Endothelial cell of umbilical vein (primary cell): ENCODE measurements at regions of chr9 and their contacts with region 1.

Region 1: DNA sequence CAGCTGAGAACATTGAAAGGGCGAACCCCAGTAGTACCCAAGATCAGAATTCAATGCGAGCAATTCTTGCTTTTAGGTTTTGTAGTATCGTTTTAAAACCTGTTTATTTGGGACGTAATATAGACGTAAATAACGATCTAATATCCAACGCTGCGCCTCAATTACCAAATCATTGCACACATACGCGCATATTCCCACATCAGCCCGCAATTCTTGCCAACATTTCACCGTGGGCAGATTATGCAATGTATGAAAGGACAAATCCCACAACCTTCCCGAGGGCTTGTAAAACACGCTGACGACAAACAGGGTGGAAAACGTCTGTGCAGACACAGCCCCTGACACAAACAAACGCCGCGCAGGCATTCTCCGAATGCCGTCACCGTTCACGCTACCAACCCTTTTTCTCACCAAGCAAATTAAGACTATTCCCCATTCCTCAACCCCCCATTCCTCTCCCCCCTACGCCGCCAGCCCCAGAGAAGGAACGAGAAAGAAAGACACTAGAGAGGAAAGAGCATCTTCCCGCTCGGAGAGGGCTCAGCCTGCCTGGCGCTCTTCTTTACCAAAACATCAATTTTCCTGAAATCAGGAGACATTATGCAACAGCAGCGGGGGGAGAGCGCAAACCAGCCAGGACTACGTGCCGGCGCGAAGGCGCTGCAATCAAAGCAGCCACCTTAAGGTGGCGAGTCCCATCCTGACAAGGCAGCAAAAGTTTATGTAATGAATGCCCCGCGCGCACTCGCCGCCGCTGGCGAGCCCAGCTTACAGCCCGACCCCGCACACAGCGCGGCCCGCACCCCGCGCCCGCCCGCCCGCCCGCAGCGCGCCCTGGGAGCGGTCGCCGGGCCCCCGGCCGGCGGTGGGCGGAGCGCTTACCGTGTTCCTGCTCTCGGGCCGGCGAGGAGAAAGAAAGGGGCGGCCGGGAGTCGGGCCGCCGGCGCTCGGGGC is 597 bp downstream of the NFIL3 start:
- DNase-seq: peak; percentile 73
- H3K4me3 ChIP-seq: peak overlapping the region; percentile 57 to 81 (median 60)
- H3K27ac ChIP-seq: peak overlapping the region; percentile 46
- H3K4me1 ChIP-seq: peaks cover 35% of the 10 kb centered on the region
- H3K27me3 ChIP-seq: no peaks in the 10 kb centered on the region
- CTCF ChIP-seq: peak; percentile 4 to 38
- POLR2A ChIP-seq: no peak

Region 2: DNA sequence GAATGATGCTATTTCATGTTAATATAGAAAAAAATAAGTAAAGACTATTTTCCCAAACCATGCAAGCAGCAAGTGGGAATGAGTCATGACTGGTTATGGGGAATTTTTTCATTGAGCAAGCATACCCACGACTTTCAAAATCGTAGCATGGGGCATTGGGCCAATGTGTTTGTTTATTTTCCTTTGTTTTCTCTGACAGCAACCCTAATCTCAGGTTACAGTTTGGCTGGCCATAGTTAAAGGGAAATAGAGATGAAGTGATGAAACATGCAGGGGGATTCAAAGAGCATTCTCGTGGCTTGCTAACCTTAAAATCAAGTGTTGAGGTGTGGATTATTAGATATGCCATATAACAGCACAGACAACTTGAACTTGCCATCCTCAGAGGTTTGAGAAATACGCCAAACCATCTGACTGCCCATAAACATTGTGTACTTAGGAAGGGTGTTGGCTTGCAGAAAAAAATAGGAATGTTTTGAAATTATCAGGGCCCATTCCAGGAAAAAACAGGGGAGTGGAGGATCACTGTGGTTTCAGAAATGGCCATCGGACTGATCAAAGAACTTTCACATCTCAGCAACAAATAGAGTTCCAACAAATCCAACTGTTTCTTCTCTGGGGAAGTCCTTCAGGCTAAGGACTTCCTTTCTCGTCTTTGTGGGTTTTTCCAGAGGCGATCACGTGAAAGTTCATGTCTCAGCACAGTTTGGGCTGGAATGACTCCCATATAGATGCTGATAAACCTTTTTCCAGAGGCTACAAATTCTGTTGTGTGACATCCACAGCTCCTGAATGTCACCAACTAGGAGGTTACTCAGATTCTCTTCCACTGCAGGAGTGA is 362.3 kb before region 1 on chr9:
- CTCF ChIA-PET with region 1: no interaction called
- POLR2A ChIA-PET with region 1: no interaction called
- dilution Hi-C with region 1: no loop called
- intact Hi-C with region 1: loop called (anchors 2 kb)
- DNase-seq: peak; percentile 98
- H3K4me3 ChIP-seq: peak overlapping the region in 1 of 3 experiments; percentile 2
- H3K27ac ChIP-seq: peak overlapping the region; percentile 68
- H3K4me1 ChIP-seq: peaks cover 43% of the 10 kb centered on the region
- H3K27me3 ChIP-seq: no peaks in the 10 kb centered on the region
- CTCF ChIP-seq: no peak
- POLR2A ChIP-seq: no peak

Region 3: GRCh38 chr9:91101611-91102168 is 321.3 kb before region 1 on chr9:
- CTCF ChIA-PET with region 1: interaction called, 6 read pairs
- POLR2A ChIA-PET with region 1: no interaction called
- dilution Hi-C with region 1: no loop called
- intact Hi-C with region 1: loop called (anchors 5 kb)
- DNase-seq: no peak
- H3K4me3 ChIP-seq: no peak overlapping the region
- H3K27ac ChIP-seq: no peak overlapping the region
- H3K4me1 ChIP-seq: peaks cover 2% of the 10 kb centered on the region
- H3K27me3 ChIP-seq: peaks cover 0 to 8% of the 10 kb centered on the region in 2 experiments
- CTCF ChIP-seq: no peak
- POLR2A ChIP-seq: no peak

Region 4: GRCh38 chr9:91285729-91286353 is 137.2 kb before region 1 on chr9:
- CTCF ChIA-PET with region 1: interaction called, 4 read pairs
- POLR2A ChIA-PET with region 1: no interaction called
- dilution Hi-C with region 1: no loop called
- intact Hi-C with region 1: loop called (anchors 5 kb)
- DNase-seq: peak; percentile 77
- H3K4me3 ChIP-seq: no peak overlapping the region
- H3K27ac ChIP-seq: peak overlapping the region; percentile 63
- H3K4me1 ChIP-seq: peaks cover 12% of the 10 kb centered on the region
- H3K27me3 ChIP-seq: no peaks in the 10 kb centered on the region
- CTCF ChIP-seq: no peak
- POLR2A ChIP-seq: no peak

Region 5: GRCh38 chr9:91361291-91362050 is 61.6 kb before region 1 on chr9 and contains the start of gene AUH:
- CTCF ChIA-PET with region 1: interaction called, 10 read pairs
- POLR2A ChIA-PET with region 1: interaction called, 4 read pairs
- dilution Hi-C with region 1: no loop called
- intact Hi-C with region 1: loop called (anchors 1 kb)
- DNase-seq: peak; percentile 82
- H3K4me3 ChIP-seq: peak within 1 kb of the TSS; percentile 84 to 95 (median 88)
- H3K27ac ChIP-seq: peak within 1 kb of the TSS; percentile 26
- H3K4me1 ChIP-seq: peaks cover 15% of the 10 kb centered on the region
- H3K27me3 ChIP-seq: no peaks in the 10 kb centered on the region
- CTCF ChIP-seq: no peak
- POLR2A ChIP-seq: peak; percentile 50
- total RNA-seq, gene AUH: 9.2 and 10.7 TPM in 2 replicates

Region 6: GRCh38 chr9:91433180-91433579 is 10.1 kb after region 1 on chr9:
- CTCF ChIA-PET with region 1: interaction called, 19 read pairs
- POLR2A ChIA-PET with region 1: no interaction called
- dilution Hi-C with region 1: no loop called
- intact Hi-C with region 1: no loop called
- DNase-seq: peak; percentile 85
- H3K4me3 ChIP-seq: no peak overlapping the region
- H3K27ac ChIP-seq: no peak overlapping the region
- H3K4me1 ChIP-seq: peaks cover 5% of the 10 kb centered on the region
- H3K27me3 ChIP-seq: peaks cover 2 to 4% of the 10 kb centered on the region in 2 experiments
- CTCF ChIP-seq: peak; percentile 51 to 53
- POLR2A ChIP-seq: no peak